Breast epithelium (tissue), 4 donors: ENCODE measurements at regions of chr13 and their contacts with region 1.

Region 1: GRCh38 chr13:96431044-96431581 is 341.2 kb downstream of the HS6ST3 start:
- DNase-seq: no peak
- H3K4me3 ChIP-seq: no peak overlapping the region
- H3K27ac ChIP-seq: no peak overlapping the region
- H3K4me1 ChIP-seq: no peaks in the 10 kb centered on the region
- H3K27me3 ChIP-seq: no peaks in the 10 kb centered on the region
- CTCF ChIP-seq: no peak
- POLR2A ChIP-seq: no peak

Region 2: GRCh38 chr13:96415831-96416385 is 15.2 kb before region 1 on chr13:
- intact Hi-C with region 1: no loop called
- DNase-seq: no peak
- H3K4me3 ChIP-seq: no peak overlapping the region
- H3K27ac ChIP-seq: no peak overlapping the region
- H3K4me1 ChIP-seq: no peaks in the 10 kb centered on the region
- H3K27me3 ChIP-seq: no peaks in the 10 kb centered on the region
- CTCF ChIP-seq: no peak
- POLR2A ChIP-seq: no peak

Region 3: DNA sequence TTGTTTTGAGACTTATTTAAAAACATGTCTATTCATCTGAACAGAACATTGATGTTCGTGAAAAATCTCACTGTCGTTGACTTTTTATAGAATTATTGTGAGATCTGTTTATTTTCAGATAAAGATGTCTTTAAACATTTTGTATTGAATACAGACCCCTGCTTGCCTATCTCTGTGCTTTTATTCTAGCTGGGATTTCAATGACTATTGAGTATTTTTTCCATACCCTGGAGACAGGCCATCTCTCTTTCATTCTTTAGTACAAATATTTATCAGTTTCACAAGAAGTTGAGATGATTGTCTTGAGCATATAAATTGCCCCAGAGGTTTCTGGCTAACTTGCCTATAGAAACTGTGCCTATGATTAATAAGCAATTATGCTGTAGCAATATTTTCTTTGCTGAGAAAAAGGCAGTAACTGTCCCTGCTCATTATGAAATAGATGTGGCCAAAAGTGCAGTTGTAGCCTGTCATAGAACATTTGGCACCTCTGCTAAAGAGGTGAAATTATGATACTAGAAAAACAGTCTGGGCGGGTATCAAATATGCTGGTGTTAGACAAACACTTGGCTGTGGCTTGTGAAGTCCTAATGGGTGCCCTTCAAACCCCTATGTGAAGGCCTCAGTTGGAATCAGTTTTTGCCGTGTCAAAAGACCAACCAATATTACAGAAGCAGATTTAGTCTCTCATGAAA is 19.4 kb after region 1 on chr13:
- intact Hi-C with region 1: no loop called
- DNase-seq: no peak
- H3K4me3 ChIP-seq: no peak overlapping the region
- H3K27ac ChIP-seq: no peak overlapping the region
- H3K4me1 ChIP-seq: no peaks in the 10 kb centered on the region
- H3K27me3 ChIP-seq: no peaks in the 10 kb centered on the region
- CTCF ChIP-seq: no peak
- POLR2A ChIP-seq: no peak

Region 4: DNA sequence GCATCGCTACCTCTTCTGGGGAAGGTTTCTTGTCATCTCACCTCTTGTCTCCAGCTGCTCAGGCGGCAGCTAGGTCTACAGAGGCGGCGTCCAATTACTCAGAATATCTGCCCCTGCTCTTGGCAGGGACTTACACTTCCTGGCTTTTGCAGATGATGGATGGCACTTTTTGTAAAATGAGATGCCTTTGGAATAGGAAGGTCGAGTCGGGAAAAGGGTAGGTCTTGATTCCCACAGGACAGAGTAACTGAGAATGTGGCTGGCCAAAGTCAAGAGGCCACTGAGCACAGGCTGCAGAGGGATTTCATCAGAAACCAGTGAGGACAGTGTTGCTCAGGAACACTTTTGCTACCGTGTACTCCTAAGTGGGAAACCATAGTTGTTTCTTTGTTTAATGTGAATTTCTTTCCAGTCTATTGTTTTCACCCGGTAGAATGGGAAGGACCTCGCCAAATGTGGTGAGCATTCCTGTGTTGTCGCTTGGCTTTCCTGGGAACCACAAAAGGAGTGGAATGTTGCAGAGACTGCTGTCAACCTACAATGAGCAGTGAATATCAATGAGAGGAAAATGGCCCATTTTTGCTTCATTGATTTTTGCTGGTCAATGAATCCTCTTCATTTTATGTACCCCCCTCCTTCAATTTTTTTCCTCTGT is 42.5 kb after region 1 on chr13:
- intact Hi-C with region 1: loop called (anchors 2 kb)
- DNase-seq: no peak
- H3K4me3 ChIP-seq: no peak overlapping the region
- H3K27ac ChIP-seq: no peak overlapping the region
- H3K4me1 ChIP-seq: no peaks in the 10 kb centered on the region
- H3K27me3 ChIP-seq: no peaks in the 10 kb centered on the region
- CTCF ChIP-seq: no peak
- POLR2A ChIP-seq: no peak

Region 5: GRCh38 chr13:97076898-97077297 is 645.8 kb after region 1 on chr13:
- intact Hi-C with region 1: no loop called
- DNase-seq: no peak
- H3K4me3 ChIP-seq: peak overlapping the region in 1 of 3 donors; percentile 14
- H3K27ac ChIP-seq: no peak overlapping the region
- H3K4me1 ChIP-seq: no peaks in the 10 kb centered on the region
- H3K27me3 ChIP-seq: no peaks in the 10 kb centered on the region
- CTCF ChIP-seq: no peak
- POLR2A ChIP-seq: no peak